ENCODE measurements at regions of chr17 and their contacts with region 1.

Region 1: GRCh38 chr17:34163646-34164045 is 91.4 kb upstream of the CCL2 start:
- DNase-seq: peak in 1 of 2 experiments; percentile 52
- H3K4me3 ChIP-seq: no peak overlapping the region
- H3K27ac ChIP-seq: no peak overlapping the region
- H3K4me1 ChIP-seq: peaks cover 0 to 3% (median 0%) of the 10 kb centered on the region in 4 experiments; a peak in 1 of 7 replicates
- H3K27me3 ChIP-seq: no peaks in the 10 kb centered on the region
- CTCF ChIP-seq: peak; percentile 81 to 85 (median 83)
- EP300 ChIP-seq: no peak
- POLR2A ChIP-seq: no peak
- RAD21 ChIP-seq: peak; percentile 94

Region 2: GRCh38 chr17:33927732-33928133 is 235.9 kb before region 1 on chr17:
- CTCF ChIA-PET with region 1: interaction called, 13 read pairs
- POLR2A ChIA-PET with region 1: no interaction called
- DNase-seq: no peak
- H3K4me3 ChIP-seq: no peak overlapping the region
- H3K27ac ChIP-seq: no peak overlapping the region
- H3K4me1 ChIP-seq: peaks cover 6 to 29% (median 18%) of the 10 kb centered on the region in 4 experiments
- H3K27me3 ChIP-seq: peaks cover 0 to 2% (median 0%) of the 10 kb centered on the region in 4 experiments; a peak in 1 of 7 replicates
- CTCF ChIP-seq: peak in 2 of 3 experiments; percentile 43 to 50; a peak in 2 of 4 replicates
- EP300 ChIP-seq: no peak
- POLR2A ChIP-seq: no peak
- RAD21 ChIP-seq: peak; percentile 62 to 74

Region 3: GRCh38 chr17:33964344-33964979 is 199.2 kb before region 1 on chr17:
- CTCF ChIA-PET with region 1: interaction called, 13 read pairs
- POLR2A ChIA-PET with region 1: no interaction called
- DNase-seq: no peak
- H3K4me3 ChIP-seq: no peak overlapping the region
- H3K27ac ChIP-seq: no peak overlapping the region
- H3K4me1 ChIP-seq: peaks cover 0 to 4% (median 1%) of the 10 kb centered on the region in 4 experiments; a peak in 2 of 7 replicates
- H3K27me3 ChIP-seq: no peaks in the 10 kb centered on the region
- CTCF ChIP-seq: peak in 2 of 3 experiments; percentile 49 to 61; a peak in 3 of 4 replicates
- EP300 ChIP-seq: no peak
- POLR2A ChIP-seq: no peak
- RAD21 ChIP-seq: peak; percentile 42 to 54; a peak in 3 of 4 replicates

Region 4: GRCh38 chr17:34081269-34081668 is 82.4 kb before region 1 on chr17:
- CTCF ChIA-PET with region 1: interaction called, 91 read pairs
- POLR2A ChIA-PET with region 1: no interaction called
- DNase-seq: peak in 1 of 2 experiments; percentile 57
- H3K4me3 ChIP-seq: no peak overlapping the region
- H3K27ac ChIP-seq: no peak overlapping the region
- H3K4me1 ChIP-seq: peaks cover 0 to 9% (median 2%) of the 10 kb centered on the region in 4 experiments; a peak in 4 of 7 replicates
- H3K27me3 ChIP-seq: no peaks in the 10 kb centered on the region
- CTCF ChIP-seq: peak; percentile 32 to 82 (median 81)
- EP300 ChIP-seq: no peak
- POLR2A ChIP-seq: no peak
- RAD21 ChIP-seq: peak; percentile 72 to 79

Region 5: DNA sequence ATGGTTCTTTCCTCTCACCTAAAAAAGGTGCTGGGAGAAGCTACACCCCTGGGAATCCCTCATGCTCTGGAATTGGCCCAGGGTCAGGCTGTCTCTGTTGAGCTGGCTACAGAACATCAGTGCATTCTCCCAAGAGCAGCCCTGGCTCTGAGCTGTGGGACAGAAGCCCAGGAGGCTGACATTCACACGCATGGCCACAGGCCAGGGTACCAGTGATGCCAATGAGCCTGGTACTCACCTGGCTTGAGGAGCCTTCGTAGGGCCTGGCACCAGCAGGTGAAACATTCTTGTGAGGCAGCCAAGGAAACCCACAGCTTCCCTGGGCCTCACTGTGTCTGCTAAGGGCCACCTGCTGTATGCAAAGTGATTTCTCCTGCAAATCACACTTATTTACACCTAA is 30.3 kb before region 1 on chr17:
- CTCF ChIA-PET with region 1: interaction called, 19 read pairs
- POLR2A ChIA-PET with region 1: no interaction called
- DNase-seq: no peak
- H3K4me3 ChIP-seq: no peak overlapping the region
- H3K27ac ChIP-seq: no peak overlapping the region
- H3K4me1 ChIP-seq: peaks cover 2 to 15% (median 10%) of the 10 kb centered on the region in 4 experiments
- H3K27me3 ChIP-seq: no peaks in the 10 kb centered on the region
- CTCF ChIP-seq: no peak
- EP300 ChIP-seq: no peak
- POLR2A ChIP-seq: no peak
- RAD21 ChIP-seq: no peak

Region 6: DNA sequence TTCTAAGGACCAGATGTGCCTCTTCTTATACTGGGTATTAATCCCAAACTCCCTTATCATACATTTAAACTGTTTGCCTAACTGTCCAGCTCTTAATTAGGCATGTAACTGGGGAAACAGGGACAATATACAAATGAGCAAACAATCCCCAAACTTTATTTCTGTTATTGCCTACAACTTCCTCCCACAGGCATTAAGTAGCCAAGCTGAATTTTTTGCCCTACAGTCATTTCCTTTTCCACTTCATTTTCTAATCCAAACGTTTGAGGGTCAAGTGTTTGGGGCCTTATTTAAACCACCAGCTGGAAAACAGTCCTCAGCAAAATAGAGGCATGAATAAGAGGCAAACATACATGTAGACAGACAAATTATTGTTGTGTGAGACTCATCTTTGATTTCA is 14.0 kb after region 1 on chr17:
- CTCF ChIA-PET with region 1: interaction called, 58 read pairs
- POLR2A ChIA-PET with region 1: no interaction called
- DNase-seq: no peak
- H3K4me3 ChIP-seq: no peak overlapping the region
- H3K27ac ChIP-seq: no peak overlapping the region
- H3K4me1 ChIP-seq: peaks cover 0 to 13% (median 6%) of the 10 kb centered on the region in 4 experiments; a peak in 4 of 7 replicates
- H3K27me3 ChIP-seq: no peaks in the 10 kb centered on the region
- CTCF ChIP-seq: no peak
- EP300 ChIP-seq: no peak
- POLR2A ChIP-seq: no peak
- RAD21 ChIP-seq: no peak

Region 7: DNA sequence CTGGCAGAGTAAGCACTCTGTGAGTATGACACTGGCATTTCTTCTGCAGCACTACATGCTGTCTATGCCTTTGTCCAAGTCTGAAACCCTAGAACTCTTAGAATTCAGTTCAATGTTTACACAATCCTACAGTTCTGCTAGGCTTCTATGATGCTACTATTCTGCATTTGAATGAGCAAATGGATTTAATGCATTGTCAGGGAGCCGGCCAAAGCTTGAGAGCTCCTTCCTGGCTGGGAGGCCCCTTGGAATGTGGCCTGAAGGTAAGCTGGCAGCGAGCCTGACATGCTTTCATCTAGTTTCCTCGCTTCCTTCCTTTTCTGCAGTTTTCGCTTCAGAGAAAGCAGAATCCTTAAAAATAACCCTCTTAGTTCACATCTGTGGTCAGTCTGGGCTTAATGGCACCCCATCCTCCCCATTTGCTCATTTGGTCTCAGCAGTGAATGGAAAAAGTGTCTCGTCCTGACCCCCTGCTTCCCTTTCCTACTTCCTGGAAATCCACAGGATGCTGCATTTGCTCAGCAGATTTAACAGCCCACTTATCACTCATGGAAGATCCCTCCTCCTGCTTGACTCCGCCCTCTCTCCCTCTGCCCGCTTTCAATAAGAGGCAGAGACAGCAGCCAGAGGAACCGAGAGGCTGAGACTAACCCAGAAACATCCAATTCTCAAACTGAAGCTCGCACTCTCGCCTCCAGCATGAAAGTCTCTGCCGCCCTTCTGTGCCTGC is 91.2 kb after region 1 on chr17 and contains the start of gene CCL2:
- CTCF ChIA-PET with region 1: no interaction called
- POLR2A ChIA-PET with region 1: no interaction called
- DNase-seq: peak; percentile 46 to 56
- H3K4me3 ChIP-seq: peak within 1 kb of the TSS; percentile 25 to 53 (median 44); a peak in 7 of 8 replicates
- H3K27ac ChIP-seq: peak within 1 kb of the TSS; percentile 32; the same call in 1 of the 2 replicates
- H3K4me1 ChIP-seq: peaks cover 4 to 11% (median 7%) of the 10 kb centered on the region in 4 experiments; a peak in 6 of 7 replicates
- H3K27me3 ChIP-seq: no peaks in the 10 kb centered on the region
- CTCF ChIP-seq: no peak
- EP300 ChIP-seq: no peak
- POLR2A ChIP-seq: no peak
- RAD21 ChIP-seq: no peak
- total RNA-seq, gene CCL2: 3.1 and 3.7 TPM in 2 replicates